ENCODE measurements at regions of chr1 and their contacts with region 1.

Region 1: GRCh38 chr1:32981003-32981901 is 16.6 kb upstream of the RNF19B start:
- DNase-seq: peak; percentile 75
- ATAC-seq: peak; percentile 94
- H3K4me3 Mint-ChIP-seq: peak overlapping the region; percentile 59
- H3K27ac Mint-ChIP-seq: peak overlapping the region; percentile 82
- H3K4me1 Mint-ChIP-seq: peaks cover 61% of the 10 kb centered on the region
- H3K27me3 Mint-ChIP-seq: no peaks in the 10 kb centered on the region

Region 2: GRCh38 chr1:32964461-32965250 is 16.6 kb before region 1 on chr1 and contains the start of gene RNF19B:
- CTCF ChIA-PET with region 1: interaction called, 4 read pairs
- POLR2A ChIA-PET with region 1: interaction called, 17 read pairs
- DNase-seq: peak; percentile 96
- ATAC-seq: peak; percentile 96
- H3K4me3 Mint-ChIP-seq: peak within 1 kb of the TSS; percentile 81
- H3K27ac Mint-ChIP-seq: peak within 1 kb of the TSS; percentile 88
- H3K4me1 Mint-ChIP-seq: peaks cover 40% of the 10 kb centered on the region
- H3K27me3 Mint-ChIP-seq: peaks cover 9% of the 10 kb centered on the region
- total RNA-seq, gene RNF19B: 14.0 to 15.8 TPM

Region 3: GRCh38 chr1:32992489-32993323 is 11.5 kb after region 1 on chr1:
- CTCF ChIA-PET with region 1: interaction called, 4 read pairs
- POLR2A ChIA-PET with region 1: interaction called, 14 read pairs
- DNase-seq: peak; percentile 64
- ATAC-seq: peak; percentile 79
- H3K4me3 Mint-ChIP-seq: peak overlapping the region; percentile 3
- H3K27ac Mint-ChIP-seq: peak overlapping the region; percentile 70
- H3K4me1 Mint-ChIP-seq: peaks cover 59% of the 10 kb centered on the region
- H3K27me3 Mint-ChIP-seq: no peaks in the 10 kb centered on the region

Region 4: DNA sequence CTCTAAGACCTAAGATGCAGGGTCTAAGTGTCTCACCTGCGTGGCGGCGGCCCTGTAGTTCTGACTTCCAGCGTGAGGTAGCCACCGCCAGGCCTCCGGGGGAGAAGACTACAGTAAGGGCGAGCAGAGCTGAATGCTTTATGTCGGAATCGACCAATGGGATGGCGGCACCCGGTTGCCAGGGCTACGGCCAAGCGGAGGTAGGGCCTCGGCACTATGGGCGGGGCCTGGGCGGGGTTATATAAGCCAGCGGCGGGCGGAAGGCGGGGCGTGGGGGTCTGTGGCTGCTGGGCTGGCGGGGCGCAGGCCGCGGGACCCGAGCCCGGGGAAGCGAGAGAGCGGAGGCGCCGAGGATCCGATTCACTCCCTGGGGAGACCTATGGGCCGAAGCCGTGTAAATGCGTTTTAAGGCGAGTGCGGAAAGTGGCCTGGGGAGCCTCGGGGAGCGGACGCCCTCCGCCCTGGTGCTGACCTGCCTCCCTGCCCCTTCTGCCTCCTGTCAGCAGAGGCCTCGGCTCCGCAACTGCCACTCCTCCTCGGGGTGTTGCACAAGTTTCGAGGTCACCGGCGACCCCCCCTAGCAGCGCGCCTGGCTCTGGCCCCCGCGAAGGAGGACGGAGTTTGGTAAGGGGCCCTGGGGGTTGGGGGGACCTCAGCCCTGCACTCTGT is 99.8 kb after region 1 on chr1 and contains the start of gene AZIN2:
- CTCF ChIA-PET with region 1: no interaction called
- POLR2A ChIA-PET with region 1: no interaction called
- DNase-seq: peak; percentile 98
- ATAC-seq: peak; percentile 97
- H3K4me3 Mint-ChIP-seq: peak within 1 kb of the TSS; percentile 78
- H3K27ac Mint-ChIP-seq: no peak within 1 kb of the TSS
- H3K4me1 Mint-ChIP-seq: peaks cover 34% of the 10 kb centered on the region
- H3K27me3 Mint-ChIP-seq: peaks cover 7% of the 10 kb centered on the region
- total RNA-seq, gene AZIN2: 11.0 to 12.0 TPM

Measured in activated CD8-positive, alpha-beta T cell treated with anti-CD3 and anti-CD28 coated beads, Interleukin-2, amount 10 ng/mL, durations not matched to agents 7 days and 5 days (primary cell).